ENCODE measurements at regions of chr19 and their contacts with region 1.

Region 1: GRCh38 chr19:41883821-41884733 is 1.1 kb downstream of the ARHGEF1 start:
- DNase-seq: peak; percentile 78 to 96 (median 90)
- ATAC-seq: peak; percentile 41
- H3K4me3 ChIP-seq: peak overlapping the region; percentile 97 to 99
- H3K4me3 Mint-ChIP-seq: peak overlapping the region; percentile 93
- H3K27ac ChIP-seq: peak overlapping the region; percentile 78 to 90
- H3K27ac Mint-ChIP-seq: peak overlapping the region; percentile 99
- H3K4me1 ChIP-seq: peaks cover 50% of the 10 kb centered on the region
- H3K4me1 Mint-ChIP-seq: peaks cover 68% of the 10 kb centered on the region
- H3K27me3 ChIP-seq: no peaks in the 10 kb centered on the region
- H3K27me3 Mint-ChIP-seq: no peaks in the 10 kb centered on the region
- CTCF ChIP-seq: no peak

Region 2: DNA sequence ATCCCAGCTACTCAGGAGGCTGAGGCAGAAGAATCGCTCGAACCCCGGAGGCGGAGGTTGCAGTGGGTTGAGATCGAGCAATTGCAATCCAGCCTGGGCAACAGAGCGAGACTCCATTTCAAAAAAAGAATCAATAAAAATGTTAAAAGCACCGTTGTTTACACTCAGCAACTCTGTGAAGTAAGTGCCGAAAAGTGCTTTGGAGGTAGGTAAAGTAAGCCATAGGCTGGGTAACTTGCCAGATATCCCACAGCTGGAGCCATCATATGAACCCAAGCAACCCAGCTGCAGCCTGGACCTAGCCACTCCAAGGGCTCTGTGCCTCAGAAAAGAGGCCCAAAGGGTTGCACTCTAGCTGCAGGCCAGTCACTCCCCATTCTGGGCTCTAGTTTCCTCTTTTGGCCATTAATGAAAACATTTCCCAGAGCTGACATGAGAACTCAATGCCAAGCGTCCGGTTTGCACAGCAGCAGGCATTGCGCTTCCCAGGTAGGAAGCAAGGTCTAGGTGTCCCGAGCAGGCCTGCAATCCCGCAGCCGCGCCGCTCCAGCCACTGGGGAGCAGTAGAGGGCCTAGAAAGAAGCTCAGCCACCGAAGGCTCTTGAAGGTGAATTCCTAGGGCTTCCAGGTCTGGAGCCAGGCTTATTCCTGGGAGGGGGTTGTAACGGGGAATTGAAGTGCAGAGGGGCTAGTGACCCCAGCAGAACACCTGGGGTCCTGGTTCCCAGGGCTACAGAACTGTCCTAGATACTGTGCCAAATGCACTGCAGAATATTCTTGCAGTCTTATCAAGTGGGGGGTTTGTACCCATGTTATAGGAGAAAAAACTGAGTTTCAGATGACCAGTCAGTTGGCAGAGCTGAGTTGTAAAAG is 11.1 kb before region 1 on chr19:
- CTCF ChIA-PET with region 1: interaction called, 163 read pairs
- POLR2A ChIA-PET with region 1: interaction called, 267 read pairs
- intact Hi-C with region 1: loop called (anchors 1 kb)
- DNase-seq: peak; percentile 49 to 83 (median 75)
- ATAC-seq: no peak
- H3K4me3 ChIP-seq: no peak overlapping the region
- H3K4me3 Mint-ChIP-seq: peak overlapping the region; percentile 40
- H3K27ac ChIP-seq: peak overlapping the region; percentile 4 to 76
- H3K27ac Mint-ChIP-seq: peak overlapping the region; percentile 98
- H3K4me1 ChIP-seq: peaks cover 94% of the 10 kb centered on the region
- H3K4me1 Mint-ChIP-seq: peaks cover 79% of the 10 kb centered on the region
- H3K27me3 ChIP-seq: no peaks in the 10 kb centered on the region
- H3K27me3 Mint-ChIP-seq: no peaks in the 10 kb centered on the region
- CTCF ChIP-seq: peak; percentile 79

Region 3: DNA sequence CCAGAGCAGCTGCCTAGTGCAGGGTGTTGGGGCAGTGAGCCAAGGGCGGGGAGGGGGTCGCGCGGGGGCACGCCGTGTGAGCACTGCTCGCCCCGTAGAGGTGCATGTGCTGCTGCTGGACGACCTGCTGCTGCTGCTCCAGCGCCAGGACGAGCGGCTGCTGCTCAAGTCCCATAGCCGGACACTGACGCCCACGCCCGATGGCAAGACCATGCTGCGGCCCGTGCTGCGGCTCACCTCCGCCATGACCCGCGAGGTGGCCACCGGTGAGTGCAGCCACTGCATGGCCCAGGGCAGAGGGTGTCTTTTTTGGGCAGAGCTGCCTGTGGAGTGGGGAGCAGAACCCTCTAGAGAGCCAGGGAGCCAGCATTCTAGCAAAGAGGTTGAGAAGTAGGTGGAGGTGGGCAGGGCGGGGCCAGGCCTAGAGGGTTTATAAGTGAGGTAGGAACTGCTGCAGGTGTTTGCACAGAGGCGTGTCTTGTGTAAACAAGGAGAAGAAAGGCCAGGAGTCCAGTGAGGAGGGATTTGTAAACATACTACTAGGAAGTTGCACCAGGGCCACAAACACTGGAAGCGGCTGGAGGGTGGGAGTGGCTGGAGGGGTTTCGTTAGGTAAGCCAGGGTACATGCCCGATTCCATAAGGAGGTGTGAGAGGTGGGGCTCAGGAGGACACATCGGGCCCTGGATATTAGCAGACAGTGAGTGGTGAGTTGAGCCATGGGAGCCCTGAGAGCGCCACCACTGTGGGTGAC is 20.2 kb after region 1 on chr19:
- CTCF ChIA-PET with region 1: interaction called, 10 read pairs
- POLR2A ChIA-PET with region 1: interaction called, 253 read pairs
- intact Hi-C with region 1: no loop called
- DNase-seq: no peak
- ATAC-seq: no peak
- H3K4me3 ChIP-seq: no peak overlapping the region
- H3K4me3 Mint-ChIP-seq: no peak overlapping the region
- H3K27ac ChIP-seq: no peak overlapping the region
- H3K27ac Mint-ChIP-seq: peak overlapping the region; percentile 29
- H3K4me1 ChIP-seq: peaks cover 61% of the 10 kb centered on the region
- H3K4me1 Mint-ChIP-seq: peaks cover 44% of the 10 kb centered on the region
- H3K27me3 ChIP-seq: no peaks in the 10 kb centered on the region
- H3K27me3 Mint-ChIP-seq: no peaks in the 10 kb centered on the region
- CTCF ChIP-seq: no peak

Region 4: GRCh38 chr19:41945135-41945766 is 61.2 kb after region 1 on chr19:
- CTCF ChIA-PET with region 1: interaction called, 26 read pairs
- POLR2A ChIA-PET with region 1: interaction called, 27 read pairs
- intact Hi-C with region 1: loop called (anchors 1 to 2 kb)
- DNase-seq: peak; percentile 80 to 98 (median 91)
- ATAC-seq: peak; percentile 82
- H3K4me3 ChIP-seq: no peak overlapping the region
- H3K4me3 Mint-ChIP-seq: peak overlapping the region; percentile 69
- H3K27ac ChIP-seq: peak overlapping the region; percentile 62 to 66
- H3K27ac Mint-ChIP-seq: peak overlapping the region; percentile 99
- H3K4me1 ChIP-seq: peaks cover 40% of the 10 kb centered on the region
- H3K4me1 Mint-ChIP-seq: peaks cover 61% of the 10 kb centered on the region
- H3K27me3 ChIP-seq: peaks cover 0 to 4% of the 10 kb centered on the region in 2 experiments
- H3K27me3 Mint-ChIP-seq: no peaks in the 10 kb centered on the region
- CTCF ChIP-seq: no peak

Region 5: DNA sequence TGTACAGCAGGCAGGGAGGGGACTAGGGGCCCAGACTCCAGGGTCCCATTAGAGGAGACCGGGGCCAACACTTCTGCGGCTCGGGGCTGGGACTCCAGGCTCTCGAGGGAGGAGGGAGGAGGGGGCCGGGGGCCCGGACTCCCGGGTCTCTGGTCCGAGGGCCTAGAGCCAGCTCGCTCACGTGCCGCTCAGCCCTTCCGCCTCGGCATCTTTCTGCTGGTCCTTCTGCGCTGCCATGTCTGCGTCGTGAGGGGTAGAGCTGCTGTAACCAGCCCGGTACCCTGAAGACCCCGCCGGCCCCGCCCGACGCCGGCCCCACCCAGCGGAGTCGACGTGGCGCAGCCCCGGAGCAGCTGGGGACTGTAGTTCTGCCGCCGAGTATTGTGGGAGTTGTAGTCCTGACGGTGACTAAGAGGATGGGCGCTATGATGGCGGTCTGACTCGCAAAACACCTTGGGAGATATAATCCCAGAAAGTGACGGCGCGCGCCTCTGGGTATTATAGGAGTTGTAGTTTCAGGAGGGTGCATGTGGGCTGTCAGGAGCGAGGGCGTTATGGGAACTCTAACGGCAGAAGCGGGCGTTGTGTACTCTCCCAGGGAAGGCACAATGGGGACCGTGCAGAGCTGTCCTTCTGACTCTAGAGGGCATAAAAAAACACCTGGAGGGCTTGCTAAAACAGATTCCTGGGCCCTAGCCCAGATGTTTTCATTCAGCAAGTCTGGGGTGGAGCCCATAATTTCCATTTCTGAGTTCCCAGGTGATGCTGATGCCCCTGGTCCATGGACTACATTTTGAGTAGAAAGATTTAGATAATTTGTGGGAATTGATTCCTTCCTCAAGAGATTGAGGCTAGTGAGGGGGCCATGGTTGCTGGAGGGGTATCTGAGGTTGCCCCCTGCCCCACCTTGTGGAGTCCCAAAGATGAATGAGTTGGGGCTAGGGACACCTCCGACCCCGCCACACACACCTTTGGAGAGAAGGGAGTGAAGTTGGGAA is 75.3 kb after region 1 on chr19 and contains the start of gene RABAC1:
- CTCF ChIA-PET with region 1: interaction called, 5 read pairs
- POLR2A ChIA-PET with region 1: interaction called, 3 read pairs
- intact Hi-C with region 1: loop called (anchors 2 kb)
- DNase-seq: peak; percentile 73 to 93 (median 90)
- ATAC-seq: peak; percentile 87
- H3K4me3 ChIP-seq: peak within 1 kb of the TSS; percentile 80 to 91
- H3K4me3 Mint-ChIP-seq: peak within 1 kb of the TSS; percentile 97
- H3K27ac ChIP-seq: peak within 1 kb of the TSS; percentile 55 to 82
- H3K27ac Mint-ChIP-seq: peak within 1 kb of the TSS; percentile 96
- H3K4me1 ChIP-seq: peaks cover 16% of the 10 kb centered on the region
- H3K4me1 Mint-ChIP-seq: peaks cover 23% of the 10 kb centered on the region
- H3K27me3 ChIP-seq: no peaks in the 10 kb centered on the region
- H3K27me3 Mint-ChIP-seq: no peaks in the 10 kb centered on the region
- CTCF ChIP-seq: peak; percentile 26
- total RNA-seq, gene RABAC1: 99.5 to 114 TPM

Measured in CD8-positive, alpha-beta T cell (primary cell).